B cell (primary cell): ENCODE measurements at regions of chr10 and their contacts with region 1.

Region 1: DNA sequence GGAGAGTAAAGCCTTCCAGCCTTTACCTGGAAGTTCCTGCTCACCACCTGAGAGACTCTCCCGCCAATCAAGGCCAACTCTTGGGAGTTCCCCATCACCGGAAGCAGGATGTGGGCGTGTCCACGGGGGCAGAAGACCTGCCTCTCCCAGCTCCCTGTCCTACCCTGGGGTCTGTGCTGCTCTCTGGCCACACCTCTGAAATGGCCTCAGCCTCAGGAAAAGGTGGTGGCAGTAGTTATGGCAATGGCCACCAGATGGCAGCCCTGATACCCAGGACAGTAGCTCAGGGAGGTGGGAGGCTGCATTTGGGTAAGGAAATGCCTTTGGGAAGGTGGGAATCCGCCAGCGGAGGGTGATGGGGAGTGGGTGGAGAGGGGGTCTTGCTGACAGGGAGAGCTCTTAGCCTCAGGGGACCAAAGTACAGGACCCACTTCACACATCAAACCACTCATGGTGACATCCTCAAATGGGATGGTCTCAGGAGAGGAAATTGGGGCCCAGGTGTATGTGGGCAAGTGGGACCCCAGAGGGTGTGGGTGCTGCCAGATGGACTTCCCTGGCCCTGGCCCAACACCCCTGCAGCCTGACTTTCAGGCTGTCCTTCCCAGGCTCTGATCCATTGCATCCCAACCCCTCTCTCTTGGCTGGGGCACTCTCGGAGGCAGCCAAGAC is 33.9 kb downstream of the KAZALD1 start:
- DNase-seq: peak; percentile 76
- ATAC-seq: peak; percentile 92
- H3K4me3 ChIP-seq: no peak overlapping the region
- H3K4me3 Mint-ChIP-seq: no peak overlapping the region
- H3K27ac ChIP-seq: no peak overlapping the region
- H3K27ac Mint-ChIP-seq: no peak overlapping the region
- H3K4me1 ChIP-seq: no peaks in the 10 kb centered on the region
- H3K4me1 Mint-ChIP-seq: peaks cover 2% of the 10 kb centered on the region
- H3K27me3 ChIP-seq: peaks cover 0 to 83% (median 10%) of the 10 kb centered on the region in 4 experiments
- H3K27me3 Mint-ChIP-seq: peaks cover 58% of the 10 kb centered on the region
- CTCF ChIP-seq: peak; percentile 87

Region 2: DNA sequence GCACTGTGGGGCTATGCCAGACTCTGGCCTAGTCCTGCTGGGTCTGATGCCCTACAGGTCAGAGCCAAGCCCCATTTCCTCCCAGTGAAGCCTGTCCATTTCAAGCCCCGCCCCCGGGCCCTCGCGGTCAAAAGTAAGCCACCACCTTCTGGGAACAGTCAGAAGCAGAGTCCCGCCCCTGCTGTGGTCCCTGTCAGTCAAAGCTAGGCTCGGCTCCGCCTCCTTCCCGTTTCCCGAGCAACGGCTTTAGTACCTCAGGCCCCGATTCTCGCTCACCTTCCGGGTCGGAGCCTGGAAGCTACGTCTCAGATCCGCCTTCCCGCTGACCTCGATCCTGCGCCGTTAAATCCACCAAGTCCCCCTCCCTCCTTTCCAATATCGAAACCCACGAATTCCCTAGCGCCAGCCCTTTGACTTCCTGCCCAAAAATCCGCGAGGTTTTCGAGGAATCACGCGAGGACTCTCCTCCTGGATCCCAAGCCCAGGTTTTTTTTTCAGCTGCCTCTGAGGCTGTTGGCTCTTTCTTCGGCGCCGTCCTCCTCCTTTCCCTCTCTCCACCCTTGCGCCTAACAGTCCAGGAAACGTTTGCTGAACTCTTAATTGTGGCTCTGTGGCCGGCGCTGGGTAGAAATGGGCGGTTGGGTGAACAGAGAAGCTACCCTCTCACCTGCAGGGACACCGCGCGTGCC is 52.9 kb before region 1 on chr10:
- CTCF ChIA-PET with region 1: interaction called, 35 read pairs
- POLR2A ChIA-PET with region 1: no interaction called
- intact Hi-C with region 1: no loop called
- DNase-seq: peak; percentile 88
- ATAC-seq: peak; percentile 90
- H3K4me3 ChIP-seq: peak overlapping the region; percentile 50 to 76 (median 68)
- H3K4me3 Mint-ChIP-seq: peak overlapping the region; percentile 100
- H3K27ac ChIP-seq: peak overlapping the region in 1 of 2 donors; percentile 76
- H3K27ac Mint-ChIP-seq: peak overlapping the region; percentile 90
- H3K4me1 ChIP-seq: peaks cover 6 to 15% of the 10 kb centered on the region in 2 donors
- H3K4me1 Mint-ChIP-seq: peaks cover 17% of the 10 kb centered on the region
- H3K27me3 ChIP-seq: peaks cover 0 to 22% (median 6%) of the 10 kb centered on the region in 4 experiments
- H3K27me3 Mint-ChIP-seq: peaks cover 19% of the 10 kb centered on the region
- CTCF ChIP-seq: no peak

Region 3: DNA sequence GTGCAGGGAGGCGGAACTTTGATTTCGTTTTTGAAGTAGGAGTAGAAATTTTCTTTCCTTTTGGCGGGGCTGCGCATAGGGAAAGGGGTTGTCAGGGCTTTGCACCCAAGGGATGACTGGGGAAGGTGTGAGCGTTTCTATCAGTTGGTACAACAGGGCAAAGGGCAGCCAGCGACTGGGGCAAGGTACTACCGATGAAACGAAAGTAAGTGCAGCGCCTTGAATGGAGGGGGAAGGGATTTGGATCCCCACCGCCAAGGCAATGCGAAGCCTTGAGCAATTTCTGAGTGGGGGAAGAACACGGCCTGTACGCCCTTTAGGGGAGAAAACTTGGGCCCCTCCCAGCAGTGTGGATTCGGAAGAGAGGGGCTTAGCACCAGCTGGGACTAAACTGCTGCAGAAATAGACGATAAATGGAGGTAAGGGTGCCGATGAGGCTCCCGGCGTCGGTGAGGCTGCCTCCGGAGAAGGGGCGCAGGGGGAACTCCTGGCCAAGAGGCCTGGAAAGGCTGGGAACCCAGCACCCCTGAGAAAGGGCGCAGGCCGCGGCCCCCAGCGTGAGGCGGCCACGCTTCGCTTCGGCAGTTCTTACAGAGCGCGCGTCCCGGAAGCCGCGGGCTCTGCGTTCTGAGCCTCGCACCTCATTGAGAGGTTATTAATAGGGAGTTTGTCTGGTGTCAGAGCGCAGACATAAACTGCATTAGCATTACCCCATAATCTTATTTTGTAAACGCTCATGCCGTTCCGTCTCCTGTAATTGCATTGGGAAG is 25.4 kb after region 1 on chr10:
- CTCF ChIA-PET with region 1: interaction called, 29 read pairs
- POLR2A ChIA-PET with region 1: no interaction called
- intact Hi-C with region 1: no loop called
- DNase-seq: peak; percentile 68
- ATAC-seq: peak; percentile 83
- H3K4me3 ChIP-seq: peak overlapping the region; percentile 51 to 91 (median 68)
- H3K4me3 Mint-ChIP-seq: peak overlapping the region; percentile 94
- H3K27ac ChIP-seq: no peak overlapping the region
- H3K27ac Mint-ChIP-seq: peak overlapping the region; percentile 82
- H3K4me1 ChIP-seq: peaks cover 32% of the 10 kb centered on the region in 2 donors
- H3K4me1 Mint-ChIP-seq: peaks cover 33% of the 10 kb centered on the region
- H3K27me3 ChIP-seq: peaks cover 0 to 67% (median 43%) of the 10 kb centered on the region in 4 experiments
- H3K27me3 Mint-ChIP-seq: peaks cover 52% of the 10 kb centered on the region
- CTCF ChIP-seq: no peak